A549 (cell line): ENCODE measurements at regions of chr10 and their contacts with region 1.

Region 1: GRCh38 chr10:49518982-49519578 is 19.8 kb downstream of the ERCC6 start:
- DNase-seq: peak; percentile 50 to 59
- ATAC-seq: peak; percentile 79 to 91
- H3K4me3 ChIP-seq: no peak overlapping the region
- H3K27ac ChIP-seq: no peak overlapping the region
- H3K4me1 ChIP-seq: no peaks in the 10 kb centered on the region
- CTCF ChIP-seq: peak; percentile 58
- EP300 ChIP-seq: no peak
- POLR2A ChIP-seq: no peak
- RAD21 ChIP-seq: peak; percentile 63 to 69

Region 2: DNA sequence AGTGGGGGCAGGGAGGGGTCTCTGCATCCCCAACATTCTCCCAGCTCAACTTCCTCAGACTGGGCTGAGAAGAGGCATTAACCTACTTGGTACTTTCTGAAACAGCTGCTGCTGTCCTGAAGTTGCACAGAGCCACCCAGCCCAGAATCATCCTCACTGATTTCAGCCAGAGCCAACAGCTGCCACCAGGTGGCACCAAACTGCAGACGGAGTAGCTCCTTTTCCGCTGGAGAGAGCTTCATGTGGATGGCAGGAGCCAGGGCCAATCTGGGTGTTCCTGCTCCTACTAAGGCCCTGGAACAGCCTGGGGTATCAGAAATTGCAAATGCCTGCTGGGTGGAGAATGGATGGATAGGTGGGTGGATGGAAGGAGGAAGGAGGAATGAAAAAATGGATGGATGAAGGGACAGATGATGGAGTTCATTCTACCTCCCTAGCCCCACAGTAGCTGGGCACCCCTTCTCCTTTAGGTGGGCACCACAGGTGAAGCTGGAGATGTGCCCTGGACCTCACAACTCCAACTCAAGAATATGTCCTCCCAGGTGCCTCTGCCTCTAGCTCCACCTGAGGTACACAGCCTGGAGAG is 111.4 kb before region 1 on chr10:
- CTCF ChIA-PET with region 1: interaction called, 154 read pairs
- POLR2A ChIA-PET with region 1: interaction called, 5 read pairs
- DNase-seq: peak; percentile 62 to 85
- ATAC-seq: peak; percentile 90 to 97
- H3K4me3 ChIP-seq: no peak overlapping the region
- H3K27ac ChIP-seq: no peak overlapping the region
- H3K4me1 ChIP-seq: no peaks in the 10 kb centered on the region
- CTCF ChIP-seq: peak; percentile 82
- EP300 ChIP-seq: no peak
- POLR2A ChIP-seq: no peak
- RAD21 ChIP-seq: peak; percentile 68 to 75

Region 3: GRCh38 chr10:49500418-49500817 is 18.7 kb before region 1 on chr10:
- CTCF ChIA-PET with region 1: interaction called, 10 read pairs
- POLR2A ChIA-PET with region 1: no interaction called
- DNase-seq: no peak
- ATAC-seq: no peak
- H3K4me3 ChIP-seq: no peak overlapping the region
- H3K27ac ChIP-seq: no peak overlapping the region
- H3K4me1 ChIP-seq: no peaks in the 10 kb centered on the region
- CTCF ChIP-seq: no peak
- EP300 ChIP-seq: no peak
- POLR2A ChIP-seq: no peak
- RAD21 ChIP-seq: no peak